T-cell (primary cell): ENCODE measurements at regions of chr10 and their contacts with region 1.

Region 1: DNA sequence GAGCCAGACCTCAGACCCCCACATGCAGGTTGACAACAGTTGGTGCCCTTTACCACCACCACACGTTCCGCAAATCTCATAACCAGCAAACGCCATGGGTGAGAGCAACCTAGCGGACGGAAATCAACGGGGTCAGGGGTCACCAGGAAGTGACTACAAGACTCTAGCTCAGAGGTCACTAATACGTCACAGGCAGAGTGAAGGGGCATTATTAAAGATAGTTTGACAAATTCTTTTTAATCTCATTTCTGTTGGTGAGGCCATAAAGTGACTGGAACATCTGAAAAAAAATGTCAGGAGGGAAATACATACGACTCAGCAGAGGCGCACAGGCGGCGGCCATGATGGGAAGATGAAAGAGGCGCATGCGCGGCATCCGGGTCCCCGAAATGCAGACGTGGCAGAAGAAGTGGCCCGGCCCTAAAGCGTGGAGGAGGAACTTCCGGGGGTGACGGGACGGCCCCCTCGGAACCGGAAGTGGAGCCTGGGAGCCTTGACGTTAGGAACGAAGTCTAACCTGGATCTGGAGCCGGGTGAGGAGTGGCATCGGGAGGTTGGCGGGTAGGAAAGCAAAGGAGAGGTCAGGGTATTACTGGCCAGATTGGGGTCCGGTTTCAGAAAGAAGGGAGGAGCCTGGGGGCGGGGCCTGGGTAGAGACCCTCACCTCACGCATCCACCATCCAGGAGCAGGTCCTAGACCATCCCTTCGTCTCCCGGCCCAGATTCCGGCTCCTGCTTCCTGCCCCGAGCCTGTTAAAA is at the start of gene SEC24C:
- DNase-seq: peak; percentile 86 to 99 (median 94)
- ATAC-seq: peak; percentile 91 to 93 (median 92)
- H3K4me3 ChIP-seq: peak within 1 kb of the TSS; percentile 85 to 100
- H3K4me3 Mint-ChIP-seq: peak within 1 kb of the TSS; percentile 95 to 100 (median 100)
- H3K27ac ChIP-seq: peak within 1 kb of the TSS; percentile 89
- H3K27ac Mint-ChIP-seq: peak within 1 kb of the TSS; percentile 100
- H3K4me1 ChIP-seq: peaks cover 15 to 32% of the 10 kb centered on the region in 2 experiments
- H3K4me1 Mint-ChIP-seq: peaks cover 34 to 43% (median 37%) of the 10 kb centered on the region in 3 donors
- H3K27me3 ChIP-seq: no peaks in the 10 kb centered on the region
- H3K27me3 Mint-ChIP-seq: no peaks in the 10 kb centered on the region
- total RNA-seq, gene SEC24C: 77.7 to 107 (median 92.2) TPM

Region 2: DNA sequence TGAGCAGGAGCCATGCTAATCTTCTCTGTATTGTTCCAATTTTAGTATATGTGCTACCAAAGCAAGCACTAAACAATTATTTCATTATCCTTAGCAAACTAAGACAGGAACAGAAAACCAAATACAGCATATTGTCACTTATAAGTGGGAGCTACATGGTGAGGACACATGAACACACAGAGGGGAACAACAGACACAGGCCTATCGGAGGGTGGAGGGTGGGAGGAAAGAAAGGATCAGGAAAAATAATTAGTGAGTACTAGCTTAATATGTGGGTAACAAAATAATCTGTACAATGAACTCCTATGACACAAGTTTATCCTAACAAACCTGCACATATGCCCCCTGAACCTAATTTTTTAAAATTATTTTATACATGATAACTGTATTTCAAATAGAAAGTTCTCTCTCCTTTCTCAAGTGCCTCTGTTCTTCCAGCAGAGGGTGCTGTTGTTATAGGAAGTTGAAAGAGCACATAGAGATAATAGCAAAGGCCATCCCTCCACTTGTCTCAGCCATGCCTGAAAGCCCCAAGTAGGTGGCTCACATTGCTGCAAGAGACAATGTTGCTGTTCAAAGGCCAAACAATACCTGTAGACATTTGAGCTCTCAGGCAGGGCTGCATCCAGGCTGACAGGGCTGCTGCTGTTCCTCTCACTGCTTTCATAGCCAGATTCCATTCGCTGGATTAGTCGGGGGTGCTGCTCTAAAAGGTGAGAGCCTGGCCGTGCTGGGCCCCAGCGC is 214.8 kb before region 1 on chr10:
- CTCF ChIA-PET with region 1: no interaction called
- POLR2A ChIA-PET with region 1: no interaction called
- DNase-seq: peak; percentile 1 to 80 (median 29)
- ATAC-seq: peak; percentile 75 to 87 (median 82)
- H3K4me3 ChIP-seq: no peak overlapping the region
- H3K4me3 Mint-ChIP-seq: no peak overlapping the region
- H3K27ac ChIP-seq: no peak overlapping the region
- H3K27ac Mint-ChIP-seq: no peak overlapping the region
- H3K4me1 ChIP-seq: no peaks in the 10 kb centered on the region
- H3K4me1 Mint-ChIP-seq: no peaks in the 10 kb centered on the region
- H3K27me3 ChIP-seq: no peaks in the 10 kb centered on the region
- H3K27me3 Mint-ChIP-seq: no peaks in the 10 kb centered on the region

Region 3: DNA sequence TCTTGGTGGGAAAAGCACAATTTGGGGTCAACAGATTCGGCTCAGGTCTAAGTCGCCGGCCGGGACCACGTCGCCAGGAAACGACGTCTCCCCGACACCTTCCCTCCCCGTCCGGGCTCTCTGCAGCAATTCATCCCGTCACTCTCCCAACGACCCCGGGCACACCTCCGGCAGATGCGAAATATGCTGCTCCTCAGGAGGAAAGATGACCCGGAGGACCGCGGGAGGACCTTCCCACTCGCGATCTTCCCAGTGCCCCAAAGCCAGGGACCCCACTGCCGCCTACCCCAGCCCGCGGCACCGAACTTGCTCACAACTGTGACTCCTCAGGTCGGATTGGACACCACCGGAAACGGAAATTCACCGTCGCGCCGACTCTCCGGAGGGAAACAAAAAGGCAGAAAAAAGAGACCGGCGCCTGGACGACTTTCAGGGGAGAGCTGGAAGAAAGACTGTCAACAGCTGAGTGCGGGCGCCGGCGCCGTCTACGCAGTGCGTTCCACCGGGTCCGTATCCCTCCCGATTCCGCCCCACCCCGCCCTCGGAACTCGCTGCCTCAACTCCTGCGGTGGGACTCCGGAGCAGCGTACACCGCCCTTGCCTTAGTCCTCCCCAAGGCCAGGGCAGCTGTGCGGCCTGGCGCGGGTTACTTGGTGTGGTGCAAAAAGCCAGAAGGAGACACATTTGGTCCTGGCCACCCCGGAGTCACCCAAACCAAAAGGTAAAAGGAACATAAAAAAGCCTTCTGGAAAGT is 13.8 kb before region 1 on chr10:
- CTCF ChIA-PET with region 1: interaction called in 1 of 2 experiments, 12 read pairs
- POLR2A ChIA-PET with region 1: interaction called, 8 to 14 read pairs
- DNase-seq: peak; percentile 72 to 96 (median 86)
- ATAC-seq: peak; percentile 90 to 92 (median 91)
- H3K4me3 ChIP-seq: peak overlapping the region; percentile 75 to 91
- H3K4me3 Mint-ChIP-seq: peak overlapping the region; percentile 89 to 97 (median 96)
- H3K27ac ChIP-seq: peak overlapping the region; percentile 78
- H3K27ac Mint-ChIP-seq: peak overlapping the region; percentile 96 to 98
- H3K4me1 ChIP-seq: peaks cover 4 to 29% of the 10 kb centered on the region in 2 experiments
- H3K4me1 Mint-ChIP-seq: peaks cover 4 to 30% (median 22%) of the 10 kb centered on the region in 3 donors
- H3K27me3 ChIP-seq: no peaks in the 10 kb centered on the region
- H3K27me3 Mint-ChIP-seq: no peaks in the 10 kb centered on the region